ENCODE measurements at regions of chr12 and their contacts with region 1.

Region 1: GRCh38 chr12:105053116-105053572 is 31.1 kb downstream of the ALDH1L2 start:
- DNase-seq: peak in 2 of 3 donors; percentile 72 to 92
- ATAC-seq: peak; percentile 84
- H3K4me3 ChIP-seq: no peak overlapping the region
- H3K4me1 ChIP-seq: no peaks in the 10 kb centered on the region
- CTCF ChIP-seq: peak; percentile 81

Region 2: DNA sequence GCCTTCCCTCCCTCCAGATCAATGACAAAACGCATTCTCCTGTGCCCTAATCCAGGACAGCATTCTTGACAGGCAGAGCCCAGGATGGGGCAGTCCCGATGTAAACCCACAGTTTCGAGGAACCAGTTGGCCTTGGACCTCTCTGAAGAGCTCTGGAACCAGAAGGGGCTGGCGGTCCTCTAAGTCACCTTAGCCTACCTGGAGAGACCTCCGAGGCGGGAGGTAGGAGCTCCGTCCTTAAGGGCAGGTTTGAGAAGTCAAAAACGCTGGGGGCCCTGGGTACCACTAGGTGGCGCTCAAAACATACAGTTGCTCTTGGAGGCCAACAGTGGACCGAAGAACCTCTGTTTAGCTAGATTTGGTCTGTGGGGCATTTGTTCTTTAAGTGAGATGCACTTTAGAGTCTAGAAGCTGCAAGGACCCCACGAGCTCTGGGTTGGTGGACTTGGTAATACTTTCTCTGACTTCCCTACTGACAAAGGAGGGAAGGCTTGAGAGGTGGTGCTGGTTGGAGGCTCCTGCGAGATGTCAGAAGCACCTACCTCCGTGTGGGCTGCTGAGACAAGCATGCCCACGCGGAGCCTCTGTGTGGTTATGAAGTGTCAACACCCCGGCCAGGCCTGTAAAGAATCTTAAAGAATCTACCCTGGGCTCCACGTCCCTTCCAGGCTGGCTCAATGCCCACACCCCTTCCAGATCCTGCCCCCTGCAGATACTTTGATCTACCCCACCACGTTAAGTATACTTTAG is 671.2 kb before region 1 on chr12:
- intact Hi-C with region 1: loop called in 1 of 2 experiments (anchors 2 kb)
- DNase-seq: peak; percentile 70 to 91 (median 77)
- ATAC-seq: peak; percentile 92
- H3K4me3 ChIP-seq: no peak overlapping the region
- H3K4me1 ChIP-seq: peaks cover 4% of the 10 kb centered on the region
- CTCF ChIP-seq: peak; percentile 86

Region 3: DNA sequence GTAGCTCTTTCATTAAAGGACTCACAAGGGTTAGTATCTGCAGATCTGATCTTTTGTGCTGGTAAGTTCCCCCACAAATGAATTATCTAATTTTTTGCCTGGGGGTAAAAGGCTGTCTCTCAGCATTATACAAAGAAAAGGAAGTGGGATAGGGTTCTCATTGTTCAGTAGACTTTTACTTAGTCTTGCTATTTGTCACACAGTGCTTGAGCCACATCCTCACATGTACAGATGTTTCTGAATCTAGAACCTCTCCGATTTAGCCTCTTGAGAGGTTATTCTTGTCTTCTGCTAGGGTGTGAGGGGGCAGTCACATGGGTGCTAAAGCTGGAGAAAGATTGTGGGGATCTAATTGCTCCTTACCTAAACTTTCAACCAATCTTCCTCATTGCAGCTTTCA is 188.1 kb before region 1 on chr12:
- intact Hi-C with region 1: no loop called
- DNase-seq: no peak
- ATAC-seq: no peak
- H3K4me3 ChIP-seq: no peak overlapping the region
- H3K4me1 ChIP-seq: no peaks in the 10 kb centered on the region
- CTCF ChIP-seq: no peak

Region 4: GRCh38 chr12:105409801-105410471 is 356.8 kb after region 1 on chr12:
- intact Hi-C with region 1: no loop called
- DNase-seq: peak in 1 of 3 donors; percentile 27
- ATAC-seq: no peak
- H3K4me3 ChIP-seq: no peak overlapping the region
- H3K4me1 ChIP-seq: no peaks in the 10 kb centered on the region
- CTCF ChIP-seq: no peak

Region 5: DNA sequence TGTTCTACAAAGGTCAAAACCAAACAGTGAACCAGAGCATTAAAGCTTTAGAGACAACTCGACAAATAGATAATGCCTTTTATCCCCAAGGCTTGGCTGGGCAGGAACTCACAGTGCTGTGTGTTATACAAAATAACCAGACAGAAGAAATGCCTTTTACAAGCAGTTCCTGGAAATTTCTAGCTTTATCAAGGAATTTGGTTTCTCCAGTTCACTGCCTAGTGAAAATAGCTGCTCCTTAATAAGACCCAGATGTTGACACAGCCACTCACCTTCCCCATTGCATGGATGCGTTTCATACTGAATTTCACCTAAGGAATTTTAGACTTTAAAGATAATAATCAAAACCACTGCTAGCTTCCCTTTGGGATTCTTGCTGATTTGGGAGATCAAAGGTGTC is 439.4 kb after region 1 on chr12:
- intact Hi-C with region 1: no loop called
- DNase-seq: no peak
- ATAC-seq: no peak
- H3K4me3 ChIP-seq: no peak overlapping the region
- H3K4me1 ChIP-seq: no peaks in the 10 kb centered on the region
- CTCF ChIP-seq: no peak